ENCODE measurements at regions of chr6 and their contacts with region 1.

Region 1: DNA sequence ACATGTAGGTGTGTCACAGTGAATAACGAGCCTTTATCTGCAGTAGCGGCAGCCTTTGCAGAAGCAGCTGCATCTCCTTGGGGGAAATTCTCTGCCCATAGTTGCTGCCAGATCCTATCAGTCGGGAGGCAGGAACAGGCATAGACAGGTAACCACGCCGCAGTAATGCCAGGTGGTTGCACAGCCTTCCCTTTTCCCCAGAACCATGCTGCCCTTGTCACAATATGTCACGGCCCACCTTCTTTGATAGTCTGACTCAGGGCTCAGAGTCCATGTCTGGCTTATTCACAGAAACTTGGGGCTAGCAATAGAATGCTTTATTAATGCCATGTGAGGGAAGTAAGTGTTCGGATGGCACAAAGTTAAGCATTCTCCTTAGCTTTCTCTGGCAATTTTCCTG is 76.6 kb downstream of the F13A1 start:
- DNase-seq: no peak
- H3K4me3 ChIP-seq: no peak overlapping the region
- H3K27ac ChIP-seq: no peak overlapping the region
- H3K4me1 ChIP-seq: peaks cover 18% of the 10 kb centered on the region
- H3K27me3 ChIP-seq: peaks cover 74% of the 10 kb centered on the region
- CTCF ChIP-seq: no peak

Region 2: GRCh38 chr6:5584078-5584482 is 659.8 kb before region 1 on chr6:
- CTCF ChIA-PET with region 1: no interaction called
- POLR2A ChIA-PET with region 1: no interaction called
- intact Hi-C with region 1: no loop called
- DNase-seq: peak; percentile 8
- H3K4me3 ChIP-seq: no peak overlapping the region
- H3K27ac ChIP-seq: peak overlapping the region; percentile 14
- H3K4me1 ChIP-seq: peaks cover 4% of the 10 kb centered on the region
- H3K27me3 ChIP-seq: no peaks in the 10 kb centered on the region
- CTCF ChIP-seq: no peak

Region 3: GRCh38 chr6:6131492-6132109 is 112.2 kb before region 1 on chr6:
- CTCF ChIA-PET with region 1: interaction called, 13 read pairs
- POLR2A ChIA-PET with region 1: no interaction called
- intact Hi-C with region 1: no loop called
- DNase-seq: peak; percentile 71
- H3K4me3 ChIP-seq: no peak overlapping the region
- H3K27ac ChIP-seq: no peak overlapping the region
- H3K4me1 ChIP-seq: no peaks in the 10 kb centered on the region
- H3K27me3 ChIP-seq: no peaks in the 10 kb centered on the region
- CTCF ChIP-seq: peak; percentile 71

Region 4: GRCh38 chr6:6654599-6655575 is 411.0 kb after region 1 on chr6:
- CTCF ChIA-PET with region 1: no interaction called
- POLR2A ChIA-PET with region 1: no interaction called
- intact Hi-C with region 1: no loop called
- DNase-seq: no peak
- H3K4me3 ChIP-seq: no peak overlapping the region
- H3K27ac ChIP-seq: no peak overlapping the region
- H3K4me1 ChIP-seq: no peaks in the 10 kb centered on the region
- H3K27me3 ChIP-seq: no peaks in the 10 kb centered on the region
- CTCF ChIP-seq: no peak

Region 5: GRCh38 chr6:6730831-6731230 is 487.0 kb after region 1 on chr6:
- CTCF ChIA-PET with region 1: no interaction called
- POLR2A ChIA-PET with region 1: no interaction called
- intact Hi-C with region 1: no loop called
- DNase-seq: no peak
- H3K4me3 ChIP-seq: no peak overlapping the region
- H3K27ac ChIP-seq: no peak overlapping the region
- H3K4me1 ChIP-seq: peaks cover 11% of the 10 kb centered on the region
- H3K27me3 ChIP-seq: no peaks in the 10 kb centered on the region
- CTCF ChIP-seq: no peak